ENCODE measurements at regions of chr6 and their contacts with region 1.

Region 1: GRCh38 chr6:11232193-11232769 is at the start of gene NEDD9:
- DNase-seq: peak; percentile 98
- ATAC-seq: peak; percentile 96
- H3K4me3 ChIP-seq: peak within 1 kb of the TSS; percentile 80 to 94 (median 87)
- H3K27ac ChIP-seq: peak within 1 kb of the TSS; percentile 94
- H3K4me1 ChIP-seq: peaks cover 52% of the 10 kb centered on the region
- H3K27me3 ChIP-seq: peaks cover 0 to 4% of the 10 kb centered on the region in 2 experiments; a peak in 2 of 5 replicates
- CTCF ChIP-seq: peak; percentile 48
- EP300 ChIP-seq: no peak; a peak in 2 of 4 replicates
- POLR2A ChIP-seq: peak; percentile 98 to 100
- RAD21 ChIP-seq: peak; percentile 50; the same call in 1 of the 2 replicates
- total RNA-seq, gene NEDD9: 27.1 and 31.4 TPM in 2 replicates

Region 2: GRCh38 chr6:11172501-11173332 is 59.6 kb before region 1 on chr6:
- CTCF ChIA-PET with region 1: no interaction called
- POLR2A ChIA-PET with region 1: interaction called, 17 read pairs
- in situ Hi-C with region 1: no loop called
- intact Hi-C with region 1: loop called (anchors 2 kb)
- DNase-seq: peak; percentile 66
- ATAC-seq: peak; percentile 86
- H3K4me3 ChIP-seq: peak overlapping the region in 1 of 3 experiments; percentile 47; a peak in 2 of 6 replicates
- H3K27ac ChIP-seq: no peak overlapping the region
- H3K4me1 ChIP-seq: peaks cover 36% of the 10 kb centered on the region
- H3K27me3 ChIP-seq: no peaks in the 10 kb centered on the region
- CTCF ChIP-seq: peak; percentile 96
- EP300 ChIP-seq: no peak
- POLR2A ChIP-seq: no peak
- RAD21 ChIP-seq: peak; percentile 83

Region 3: GRCh38 chr6:11218538-11219399 is 13.5 kb before region 1 on chr6:
- CTCF ChIA-PET with region 1: no interaction called
- POLR2A ChIA-PET with region 1: interaction called, 106 read pairs
- in situ Hi-C with region 1: no loop called
- intact Hi-C with region 1: loop called (anchors 2 kb)
- DNase-seq: peak; percentile 99
- ATAC-seq: peak; percentile 91
- H3K4me3 ChIP-seq: peak overlapping the region; percentile 13 to 54 (median 21)
- H3K27ac ChIP-seq: peak overlapping the region; percentile 85
- H3K4me1 ChIP-seq: peaks cover 100% of the 10 kb centered on the region
- H3K27me3 ChIP-seq: no peaks in the 10 kb centered on the region
- CTCF ChIP-seq: peak; percentile 46
- EP300 ChIP-seq: peak; percentile 86 to 89; a peak in 3 of 4 replicates
- POLR2A ChIP-seq: peak in 1 of 2 experiments; percentile 77; a peak in 3 of 4 replicates
- RAD21 ChIP-seq: peak; percentile 76

Region 4: GRCh38 chr6:11298651-11299420 is 66.6 kb after region 1 on chr6:
- CTCF ChIA-PET with region 1: no interaction called
- POLR2A ChIA-PET with region 1: interaction called, 32 read pairs
- in situ Hi-C with region 1: no loop called
- intact Hi-C with region 1: loop called (anchors 2 kb)
- DNase-seq: peak; percentile 98
- ATAC-seq: peak; percentile 98
- H3K4me3 ChIP-seq: peak overlapping the region in 2 of 3 experiments; percentile 15 to 61; a peak in 2 of 6 replicates
- H3K27ac ChIP-seq: peak overlapping the region; percentile 90
- H3K4me1 ChIP-seq: peaks cover 44% of the 10 kb centered on the region
- H3K27me3 ChIP-seq: no peaks in the 10 kb centered on the region
- CTCF ChIP-seq: peak; percentile 17; the same call in 1 of the 2 replicates
- EP300 ChIP-seq: peak; percentile 92 to 94
- POLR2A ChIP-seq: peak; percentile 9 to 49; a peak in 1 of 4 replicates
- RAD21 ChIP-seq: peak; percentile 42

Region 5: GRCh38 chr6:11398451-11399326 is 166.4 kb after region 1 on chr6:
- CTCF ChIA-PET with region 1: no interaction called
- POLR2A ChIA-PET with region 1: interaction called, 24 read pairs
- in situ Hi-C with region 1: no loop called
- intact Hi-C with region 1: no loop called
- DNase-seq: peak; percentile 97
- ATAC-seq: peak; percentile 88
- H3K4me3 ChIP-seq: peak overlapping the region in 1 of 3 experiments; percentile 19; a peak in 1 of 6 replicates
- H3K27ac ChIP-seq: peak overlapping the region; percentile 95
- H3K4me1 ChIP-seq: peaks cover 73% of the 10 kb centered on the region
- H3K27me3 ChIP-seq: no peaks in the 10 kb centered on the region
- CTCF ChIP-seq: no peak
- EP300 ChIP-seq: peak; percentile 76 to 98
- POLR2A ChIP-seq: peak; percentile 41 to 45; a peak in 2 of 4 replicates
- RAD21 ChIP-seq: no peak

Region 6: GRCh38 chr6:11575408-11576033 is 343.2 kb after region 1 on chr6:
- CTCF ChIA-PET with region 1: no interaction called
- POLR2A ChIA-PET with region 1: no interaction called
- in situ Hi-C with region 1: no loop called
- intact Hi-C with region 1: loop called (anchors 2 kb)
- DNase-seq: peak; percentile 82
- ATAC-seq: peak; percentile 100
- H3K4me3 ChIP-seq: no peak overlapping the region
- H3K27ac ChIP-seq: no peak overlapping the region
- H3K4me1 ChIP-seq: peaks cover 6% of the 10 kb centered on the region
- H3K27me3 ChIP-seq: no peaks in the 10 kb centered on the region
- CTCF ChIP-seq: peak; percentile 99
- EP300 ChIP-seq: peak in 1 of 2 experiments; percentile 18; a peak in 1 of 4 replicates
- POLR2A ChIP-seq: no peak
- RAD21 ChIP-seq: peak; percentile 89